Testis (tissue), 5 donors: ENCODE measurements at regions of chr10 and their contacts with region 1.

Region 1: DNA sequence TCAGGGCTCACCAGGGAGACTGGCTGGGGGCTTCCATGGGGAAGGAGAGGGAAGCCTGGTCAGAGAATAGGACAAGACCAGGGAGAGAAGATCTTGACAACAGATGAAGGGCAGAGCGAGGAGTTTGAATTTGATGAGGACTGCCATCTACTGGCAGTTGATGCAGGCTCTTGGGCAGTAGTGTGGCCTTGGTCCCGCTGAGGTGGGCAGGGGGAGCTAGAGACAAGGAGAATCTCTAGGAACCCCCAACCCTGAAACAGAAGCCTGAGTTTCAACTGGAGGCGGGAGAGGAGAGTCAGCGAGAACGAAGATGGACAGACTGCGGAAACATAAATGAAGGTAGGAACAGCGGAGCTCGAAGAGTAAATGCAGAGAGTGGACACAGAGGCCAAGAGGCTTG is 81.0 kb downstream of the PPP1R3C start:
- DNase-seq: peak; percentile 77
- H3K4me3 ChIP-seq: no peak overlapping the region
- H3K27ac ChIP-seq: peak overlapping the region in 1 of 2 donors; percentile 33
- H3K4me1 ChIP-seq: no peaks in the 10 kb centered on the region
- H3K27me3 ChIP-seq: no peaks in the 10 kb centered on the region
- CTCF ChIP-seq: peak; percentile 24 to 66 (median 56)
- POLR2A ChIP-seq: no peak

Region 2: DNA sequence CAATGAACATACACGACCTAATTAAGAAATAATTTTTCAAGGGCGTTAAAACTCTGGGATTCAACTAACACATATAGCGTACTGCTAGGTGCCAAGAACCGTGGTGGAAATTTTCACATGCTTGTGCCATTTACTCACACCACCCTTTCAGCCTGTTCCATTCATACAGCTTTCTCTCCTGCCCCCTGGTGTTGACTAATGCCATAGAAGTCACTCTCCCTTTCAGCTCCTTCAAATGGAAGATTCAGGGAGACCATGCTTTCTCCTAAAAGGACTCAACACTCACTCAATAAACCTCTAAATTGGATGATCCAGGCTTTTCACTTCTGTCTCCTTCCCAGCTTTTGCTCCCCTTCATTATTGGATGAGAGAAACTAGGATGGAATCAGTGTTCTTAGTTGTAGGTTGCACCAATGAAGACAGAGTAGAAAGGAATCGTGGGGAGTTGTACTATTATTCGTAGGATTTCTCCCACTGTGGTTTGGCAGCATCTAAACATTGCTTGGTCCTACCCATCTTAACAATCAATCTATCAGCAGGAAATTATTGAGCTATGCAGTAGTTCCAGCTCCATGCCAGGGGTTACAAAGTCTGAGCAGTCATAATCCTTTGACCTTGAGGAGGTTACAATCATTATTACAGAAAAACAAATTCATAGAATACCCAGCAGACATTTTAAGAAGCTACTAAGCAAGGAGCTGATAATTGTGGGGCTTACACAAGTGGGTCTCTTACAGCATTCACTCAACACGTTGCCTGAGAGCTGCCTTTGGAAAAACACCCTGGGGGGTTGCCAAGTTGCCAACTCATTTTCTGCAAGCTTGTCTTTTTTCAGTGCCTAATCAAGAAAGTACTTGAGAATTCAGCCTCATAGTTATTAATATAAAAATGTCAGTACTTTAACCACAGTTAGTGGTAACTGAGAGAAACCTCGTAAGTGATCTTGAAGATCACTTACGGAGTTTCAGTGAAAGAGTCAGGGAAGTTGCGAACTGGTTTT is 83.8 kb after region 1 on chr10:
- intact Hi-C with region 1: loop called (anchors 5 kb)
- DNase-seq: peak; percentile 86
- H3K4me3 ChIP-seq: no peak overlapping the region
- H3K27ac ChIP-seq: no peak overlapping the region
- H3K4me1 ChIP-seq: no peaks in the 10 kb centered on the region
- H3K27me3 ChIP-seq: no peaks in the 10 kb centered on the region
- CTCF ChIP-seq: peak; percentile 68 to 88 (median 83)
- POLR2A ChIP-seq: no peak

Region 3: DNA sequence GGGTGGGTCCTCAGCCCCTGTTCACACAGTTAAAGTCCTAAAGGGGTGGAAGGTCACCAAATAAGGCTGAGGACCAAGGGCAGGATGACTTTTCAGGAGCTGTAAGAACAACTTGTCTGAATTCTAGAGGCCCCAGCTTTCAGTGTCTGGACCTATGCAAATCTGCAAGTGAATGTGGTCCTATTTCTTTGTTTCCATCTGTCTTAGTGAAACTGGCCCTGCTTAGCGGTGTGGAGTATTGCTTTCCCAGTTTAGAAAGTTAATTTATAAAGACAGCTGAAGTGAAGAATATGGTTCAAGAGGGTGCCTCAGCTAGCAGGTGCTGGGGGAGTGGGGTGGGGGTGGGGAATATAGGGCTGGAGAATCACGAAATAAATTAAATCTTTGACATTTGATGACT is 1178.0 kb after region 1 on chr10:
- intact Hi-C with region 1: no loop called
- DNase-seq: no peak
- H3K4me3 ChIP-seq: no peak overlapping the region
- H3K27ac ChIP-seq: no peak overlapping the region
- H3K4me1 ChIP-seq: no peaks in the 10 kb centered on the region
- H3K27me3 ChIP-seq: no peaks in the 10 kb centered on the region
- CTCF ChIP-seq: no peak
- POLR2A ChIP-seq: no peak